Activated CD4-positive, alpha-beta T cell treated with anti-CD3 and anti-CD28 coated beads for 36 hours (primary cell): ENCODE measurements at regions of chr9 and their contacts with region 1.

Region 1: DNA sequence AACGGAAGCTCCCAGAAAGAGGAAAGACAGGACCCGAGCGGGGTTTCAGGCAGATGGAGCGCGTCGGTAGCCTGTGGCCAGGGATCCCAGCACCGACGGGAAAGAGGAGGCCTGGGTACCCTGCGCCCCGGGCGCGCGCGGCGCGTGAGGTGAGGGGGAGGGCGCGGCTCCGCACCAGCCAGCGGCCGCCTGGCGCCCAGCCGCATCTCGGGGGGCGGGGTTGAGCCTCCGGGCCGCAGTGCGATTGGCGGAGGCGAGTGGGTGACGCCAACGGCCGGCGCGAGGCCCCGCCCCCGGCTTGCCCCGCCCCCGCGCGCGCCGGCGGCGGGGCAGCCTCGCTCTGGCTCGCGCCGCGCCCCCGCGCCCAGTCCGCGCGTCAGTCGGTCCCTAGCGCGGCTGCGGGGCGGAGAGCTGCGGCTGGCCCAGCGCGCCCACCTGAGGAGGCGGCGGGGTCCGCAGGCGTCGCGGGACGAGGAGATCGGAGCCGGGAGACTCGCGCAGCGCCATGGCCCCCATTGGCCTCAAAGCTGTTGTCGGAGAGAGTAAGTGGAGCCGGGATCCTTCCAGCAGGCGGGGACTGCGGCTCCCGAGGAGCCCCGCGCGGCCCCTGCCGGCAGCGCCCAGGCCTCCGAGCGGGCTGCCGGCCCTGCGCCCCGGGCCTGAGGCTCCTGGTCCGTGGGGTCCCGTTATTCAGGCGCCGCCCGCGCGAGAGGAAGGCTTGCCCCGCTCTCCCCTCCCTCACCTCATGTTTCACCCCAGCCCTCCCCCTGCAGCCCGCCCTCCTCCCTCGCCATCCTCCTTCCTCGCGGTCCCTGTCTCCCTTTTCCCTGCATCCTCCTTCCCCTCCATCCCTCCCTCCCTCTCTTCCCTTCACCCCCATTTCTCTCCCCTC is at the start of gene STXBP1:
- DNase-seq: peak; percentile 92
- ATAC-seq: peak; percentile 87
- H3K4me3 Mint-ChIP-seq: peak within 1 kb of the TSS; percentile 85
- H3K27ac Mint-ChIP-seq: peak within 1 kb of the TSS; percentile 71
- H3K4me1 Mint-ChIP-seq: peaks cover 26% of the 10 kb centered on the region
- H3K27me3 Mint-ChIP-seq: peaks cover 32% of the 10 kb centered on the region
- total RNA-seq, gene STXBP1: 15.9 to 18.1 TPM

Region 2: DNA sequence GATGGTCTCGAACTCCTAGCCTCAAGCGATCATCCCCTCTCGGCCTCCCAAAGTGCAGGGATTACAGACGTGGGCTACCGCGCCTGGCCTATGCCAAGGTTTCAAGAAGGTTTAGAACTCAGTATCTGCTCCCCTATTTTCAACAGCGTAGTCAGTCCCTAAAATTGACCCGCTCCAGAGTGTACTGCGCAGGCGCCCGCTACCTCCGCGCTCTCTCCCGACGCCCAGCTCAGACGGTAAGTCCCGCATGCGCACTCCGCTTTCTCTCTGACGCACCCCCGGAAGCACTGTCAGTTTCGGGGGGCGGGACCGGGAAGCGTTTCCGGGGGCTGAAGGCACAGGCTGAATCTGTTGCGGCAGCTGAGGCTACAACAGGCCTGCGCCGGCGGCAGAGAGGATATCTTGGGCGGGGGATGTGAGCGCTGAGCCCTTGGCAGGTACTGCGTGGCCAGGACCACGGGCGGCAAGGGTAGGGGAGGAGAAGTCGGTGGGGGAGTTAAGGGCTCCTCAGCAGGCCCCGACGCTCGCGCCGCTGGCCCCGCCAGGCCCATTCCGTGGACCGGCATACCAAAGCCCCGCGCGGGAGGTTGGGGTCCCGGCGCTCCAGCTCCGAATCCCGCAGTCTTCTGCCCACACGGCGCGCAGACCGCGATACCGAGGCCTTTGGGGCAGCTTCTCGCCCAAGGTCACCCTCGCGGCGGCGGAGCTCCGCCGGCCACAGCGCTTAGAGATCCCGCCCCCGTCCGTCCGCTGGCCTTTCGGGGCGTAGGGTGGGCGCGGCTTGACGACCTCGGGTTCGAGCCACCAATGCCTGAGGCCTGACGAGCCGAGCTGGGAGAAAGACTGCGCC is 807.2 kb before region 1 on chr9 and contains the start of gene ZBTB43:
- CTCF ChIA-PET with region 1: no interaction called
- POLR2A ChIA-PET with region 1: no interaction called
- intact Hi-C with region 1: loop called in 1 of 2 experiments (anchors 5 kb)
- DNase-seq: peak; percentile 99
- ATAC-seq: peak; percentile 85
- H3K4me3 Mint-ChIP-seq: peak within 1 kb of the TSS; percentile 96
- H3K27ac Mint-ChIP-seq: peak within 1 kb of the TSS; percentile 100
- H3K4me1 Mint-ChIP-seq: peaks cover 36% of the 10 kb centered on the region
- H3K27me3 Mint-ChIP-seq: no peaks in the 10 kb centered on the region
- total RNA-seq, gene ZBTB43: 19.3 to 23.0 TPM

Region 3: GRCh38 chr9:127224178-127224882 is 387.8 kb before region 1 on chr9:
- CTCF ChIA-PET with region 1: no interaction called
- POLR2A ChIA-PET with region 1: no interaction called
- intact Hi-C with region 1: loop called in 1 of 2 experiments (anchors 1 kb)
- DNase-seq: peak; percentile 93
- ATAC-seq: peak; percentile 79
- H3K4me3 Mint-ChIP-seq: peak overlapping the region; percentile 68
- H3K27ac Mint-ChIP-seq: peak overlapping the region; percentile 16
- H3K4me1 Mint-ChIP-seq: peaks cover 24% of the 10 kb centered on the region
- H3K27me3 Mint-ChIP-seq: peaks cover 15% of the 10 kb centered on the region

Region 4: GRCh38 chr9:127396808-127397497 is 215.2 kb before region 1 on chr9 and contains the start of gene SLC2A8:
- CTCF ChIA-PET with region 1: no interaction called
- POLR2A ChIA-PET with region 1: no interaction called
- intact Hi-C with region 1: loop called in 1 of 2 experiments (anchors 2 kb)
- DNase-seq: peak; percentile 93
- ATAC-seq: peak; percentile 96
- H3K4me3 Mint-ChIP-seq: peak within 1 kb of the TSS; percentile 58
- H3K27ac Mint-ChIP-seq: no peak within 1 kb of the TSS
- H3K4me1 Mint-ChIP-seq: peaks cover 12% of the 10 kb centered on the region
- H3K27me3 Mint-ChIP-seq: peaks cover 62% of the 10 kb centered on the region
- total RNA-seq, gene SLC2A8: 1.3 to 1.7 TPM

Region 5: GRCh38 chr9:127698985-127699670 is 87.0 kb after region 1 on chr9:
- CTCF ChIA-PET with region 1: no interaction called
- POLR2A ChIA-PET with region 1: no interaction called
- intact Hi-C with region 1: loop called in 1 of 2 experiments (anchors 1 kb)
- DNase-seq: peak; percentile 91
- ATAC-seq: peak; percentile 100
- H3K4me3 Mint-ChIP-seq: peak overlapping the region; percentile 67
- H3K27ac Mint-ChIP-seq: peak overlapping the region; percentile 21
- H3K4me1 Mint-ChIP-seq: peaks cover 12% of the 10 kb centered on the region
- H3K27me3 Mint-ChIP-seq: no peaks in the 10 kb centered on the region

Region 6: GRCh38 chr9:127770905-127771569 is 158.9 kb after region 1 on chr9:
- CTCF ChIA-PET with region 1: interaction called, 4 read pairs
- POLR2A ChIA-PET with region 1: no interaction called
- intact Hi-C with region 1: loop called in 1 of 2 experiments (anchors 1 kb)
- DNase-seq: peak; percentile 99
- ATAC-seq: peak; percentile 95
- H3K4me3 Mint-ChIP-seq: peak overlapping the region; percentile 80
- H3K27ac Mint-ChIP-seq: peak overlapping the region; percentile 80
- H3K4me1 Mint-ChIP-seq: peaks cover 59% of the 10 kb centered on the region
- H3K27me3 Mint-ChIP-seq: no peaks in the 10 kb centered on the region